ENCODE measurements at regions of chr1 and their contacts with region 1.

Region 1: GRCh38 chr1:38026592-38027200 is 14.2 kb downstream of the UTP11 start:
- DNase-seq: peak; percentile 75
- H3K4me3 Mint-ChIP-seq: peak overlapping the region; percentile 41
- H3K27ac Mint-ChIP-seq: peak overlapping the region; percentile 34
- H3K4me1 Mint-ChIP-seq: peaks cover 51% of the 10 kb centered on the region
- H3K27me3 Mint-ChIP-seq: no peaks in the 10 kb centered on the region

Region 2: GRCh38 chr1:38012363-38013226 is 14.1 kb before region 1 on chr1 and contains the start of gene UTP11:
- intact Hi-C with region 1: loop called (anchors 1 kb)
- DNase-seq: peak; percentile 97
- H3K4me3 Mint-ChIP-seq: peak within 1 kb of the TSS; percentile 92
- H3K27ac Mint-ChIP-seq: peak within 1 kb of the TSS; percentile 95
- H3K4me1 Mint-ChIP-seq: peaks cover 46% of the 10 kb centered on the region
- H3K27me3 Mint-ChIP-seq: no peaks in the 10 kb centered on the region
- total RNA-seq, gene UTP11: 99.5 and 111 TPM in 2 replicates

Region 3: GRCh38 chr1:38046884-38047602 is 20.3 kb after region 1 on chr1:
- intact Hi-C with region 1: loop called (anchors 1 kb)
- DNase-seq: peak; percentile 91
- H3K4me3 Mint-ChIP-seq: peak overlapping the region; percentile 81
- H3K27ac Mint-ChIP-seq: peak overlapping the region; percentile 58
- H3K4me1 Mint-ChIP-seq: peaks cover 9% of the 10 kb centered on the region
- H3K27me3 Mint-ChIP-seq: peaks cover 48% of the 10 kb centered on the region

Region 4: GRCh38 chr1:38071312-38072256 is 44.9 kb after region 1 on chr1:
- intact Hi-C with region 1: loop called (anchors 2 kb)
- DNase-seq: no peak
- H3K4me3 Mint-ChIP-seq: no peak overlapping the region
- H3K27ac Mint-ChIP-seq: no peak overlapping the region
- H3K4me1 Mint-ChIP-seq: no peaks in the 10 kb centered on the region
- H3K27me3 Mint-ChIP-seq: peaks cover 26% of the 10 kb centered on the region

Region 5: GRCh38 chr1:38533772-38534472 is 507.2 kb after region 1 on chr1:
- intact Hi-C with region 1: loop called (anchors 10 kb)
- DNase-seq: no peak
- H3K4me3 Mint-ChIP-seq: no peak overlapping the region
- H3K27ac Mint-ChIP-seq: peak overlapping the region; percentile 68
- H3K4me1 Mint-ChIP-seq: peaks cover 8% of the 10 kb centered on the region
- H3K27me3 Mint-ChIP-seq: peaks cover 10% of the 10 kb centered on the region

Region 6: DNA sequence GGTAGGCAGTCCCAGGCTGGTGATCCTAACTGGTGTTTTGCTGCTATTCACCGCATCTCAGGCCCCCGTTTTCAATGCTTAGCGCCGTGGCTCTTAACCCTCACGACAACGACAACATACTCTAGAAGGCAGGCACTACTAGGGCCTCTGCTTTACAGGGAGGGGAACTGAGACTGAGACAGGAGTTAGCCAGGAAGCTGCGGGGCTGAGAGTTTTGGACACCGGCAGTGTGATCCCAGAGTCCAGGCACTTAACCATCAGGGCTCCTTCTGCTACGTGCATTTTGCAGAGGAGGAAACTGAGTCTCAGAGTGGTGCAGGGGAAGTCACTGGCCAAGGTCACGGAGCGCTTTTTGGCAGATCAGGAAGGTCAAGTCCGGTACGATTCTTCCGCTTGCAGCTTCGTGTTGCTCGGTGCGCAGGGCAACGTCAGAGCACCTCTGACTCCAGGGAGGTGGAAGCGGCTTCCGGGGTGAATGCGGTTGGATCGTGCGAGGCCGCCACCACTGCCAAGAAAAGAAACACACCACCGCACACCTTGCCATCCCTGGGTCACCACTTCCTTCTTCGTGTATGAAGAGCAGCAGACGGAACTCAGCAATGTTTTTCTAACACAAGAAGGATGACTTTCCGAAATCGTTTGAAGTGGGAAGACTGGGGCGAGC is 532.6 kb after region 1 on chr1:
- intact Hi-C with region 1: loop called (anchors 1 kb)
- DNase-seq: peak; percentile 97
- H3K4me3 Mint-ChIP-seq: peak overlapping the region; percentile 74
- H3K27ac Mint-ChIP-seq: peak overlapping the region; percentile 88
- H3K4me1 Mint-ChIP-seq: peaks cover 64% of the 10 kb centered on the region
- H3K27me3 Mint-ChIP-seq: peaks cover 37% of the 10 kb centered on the region

Region 7: DNA sequence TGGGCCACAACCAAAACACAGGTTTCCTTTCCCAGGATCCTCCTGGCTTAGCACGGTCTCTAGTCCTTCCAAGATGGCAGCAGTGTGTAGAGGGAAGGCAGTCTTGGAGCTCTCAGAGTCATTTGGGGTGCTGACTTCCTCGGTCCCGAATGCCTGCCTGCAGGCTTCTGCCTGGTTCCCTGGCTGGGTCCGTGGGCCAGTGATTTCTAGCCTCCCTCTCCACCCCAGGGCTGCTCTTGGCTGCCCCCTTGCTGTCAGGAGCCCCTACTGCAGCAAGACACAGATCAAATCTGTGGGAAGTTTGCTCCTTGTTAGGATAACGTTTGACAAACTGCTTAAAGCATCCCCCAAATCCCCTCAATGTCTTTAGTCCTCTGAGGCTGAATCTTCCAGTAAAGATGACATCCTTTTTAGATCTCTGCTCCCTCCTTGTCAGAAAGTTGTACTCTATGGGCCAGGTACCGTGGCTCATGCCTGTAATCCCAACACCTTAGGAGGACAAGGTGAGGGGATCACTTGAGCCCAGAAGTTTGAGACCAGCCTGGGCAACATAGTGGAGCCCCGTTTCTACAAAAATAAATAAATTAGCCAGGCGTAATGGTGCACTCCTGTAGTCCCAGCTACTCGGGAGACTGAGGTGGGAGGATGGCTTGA is 560.4 kb after region 1 on chr1:
- intact Hi-C with region 1: loop called (anchors 5 kb)
- DNase-seq: peak; percentile 86
- H3K4me3 Mint-ChIP-seq: no peak overlapping the region
- H3K27ac Mint-ChIP-seq: no peak overlapping the region
- H3K4me1 Mint-ChIP-seq: peaks cover 14% of the 10 kb centered on the region
- H3K27me3 Mint-ChIP-seq: peaks cover 16% of the 10 kb centered on the region

Measured in activated CD4-positive, alpha-beta T cell treated with anti-CD3 and anti-CD28 coated beads, Interleukin-2, amount 10 ng/mL, durations not matched to agents 24 days and 14 days (primary cell).